HEK293 (cell line): ENCODE measurements at regions of chr1 and their contacts with region 1.

Region 1: GRCh38 chr1:112011215-112011614 is 21.7 kb upstream of the KCND3 start:
- H3K4me3 ChIP-seq: no peak overlapping the region
- H3K27ac ChIP-seq: no peak overlapping the region
- H3K4me1 ChIP-seq: no peaks in the 10 kb centered on the region
- CTCF ChIP-seq: no peak

Region 2: DNA sequence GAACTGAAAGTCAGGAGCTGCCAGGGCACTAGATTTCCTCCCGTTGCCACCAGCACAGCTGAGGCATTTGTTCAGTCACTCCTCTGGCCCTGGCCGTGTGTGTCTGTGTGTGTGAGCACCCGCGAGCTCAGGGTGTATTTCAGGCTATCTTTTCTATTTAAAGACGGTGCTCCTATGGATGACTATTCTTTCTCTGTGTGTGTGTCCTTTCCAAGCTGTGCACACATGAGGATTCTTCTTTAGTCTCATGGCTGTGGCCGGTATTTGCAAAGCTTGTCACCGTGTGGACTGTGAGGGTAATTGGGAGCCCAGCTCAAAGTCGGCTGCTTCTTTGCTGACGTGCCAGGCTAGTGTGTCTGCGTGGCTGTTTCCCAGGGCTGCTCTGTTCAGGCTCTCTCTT is 18.7 kb before region 1 on chr1:
- CTCF ChIA-PET with region 1: interaction called, 10 read pairs
- POLR2A ChIA-PET with region 1: no interaction called
- H3K4me3 ChIP-seq: no peak overlapping the region
- H3K27ac ChIP-seq: no peak overlapping the region
- H3K4me1 ChIP-seq: 0 out of 2 replicates have a peak, but pooled peaks cover 2% of the 10 kb centered on the region
- CTCF ChIP-seq: no peak

Region 3: GRCh38 chr1:112026018-112026417 is 14.8 kb after region 1 on chr1:
- CTCF ChIA-PET with region 1: no interaction called
- POLR2A ChIA-PET with region 1: no interaction called
- H3K4me3 ChIP-seq: no peak overlapping the region
- H3K27ac ChIP-seq: no peak overlapping the region
- H3K4me1 ChIP-seq: no peaks in the 10 kb centered on the region
- CTCF ChIP-seq: no peak